Gastrocnemius medialis (tissue), 4 donors: ENCODE measurements at regions of chr7 and their contacts with region 1.

Region 1: GRCh38 chr7:30303312-30304039 is 19.1 kb downstream of the ZNRF2 start:
- DNase-seq: no peak
- ATAC-seq: no peak
- H3K4me3 ChIP-seq: no peak overlapping the region
- H3K27ac ChIP-seq: no peak overlapping the region
- H3K4me1 ChIP-seq: peaks cover 47 to 51% of the 10 kb centered on the region in 2 donors
- H3K27me3 ChIP-seq: no peaks in the 10 kb centered on the region
- CTCF ChIP-seq: no peak
- POLR2A ChIP-seq: no peak

Region 2: DNA sequence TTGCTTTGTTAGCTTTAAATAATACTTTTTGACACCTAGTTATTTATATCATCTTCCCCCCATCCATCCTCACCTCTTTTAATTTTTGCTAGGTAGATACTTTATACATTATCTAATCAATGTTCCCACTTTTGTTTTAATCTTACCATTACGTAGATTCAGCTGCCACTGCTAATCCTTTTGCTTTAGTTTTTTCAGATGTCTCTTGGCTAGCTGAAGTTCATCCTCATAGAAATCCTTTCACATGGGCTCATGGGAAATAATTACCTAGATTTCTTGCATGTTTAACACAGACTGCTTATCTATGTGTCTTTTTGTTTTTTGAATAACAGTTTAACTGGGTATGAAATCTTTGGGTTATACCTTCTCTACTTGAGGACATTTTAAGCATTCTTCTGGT is 41.0 kb after region 1 on chr7:
- in situ Hi-C with region 1: no loop called
- intact Hi-C with region 1: loop called (anchors 5 kb)
- DNase-seq: no peak
- ATAC-seq: no peak
- H3K4me3 ChIP-seq: no peak overlapping the region
- H3K27ac ChIP-seq: no peak overlapping the region
- H3K4me1 ChIP-seq: peaks cover 14 to 23% of the 10 kb centered on the region in 2 donors
- H3K27me3 ChIP-seq: no peaks in the 10 kb centered on the region
- CTCF ChIP-seq: no peak
- POLR2A ChIP-seq: no peak